Activated B cell treated with CpG ODN at 0.5 μM for 24 hours (primary cell): ENCODE measurements at regions of chr14 and their contacts with region 1.

Region 1: DNA sequence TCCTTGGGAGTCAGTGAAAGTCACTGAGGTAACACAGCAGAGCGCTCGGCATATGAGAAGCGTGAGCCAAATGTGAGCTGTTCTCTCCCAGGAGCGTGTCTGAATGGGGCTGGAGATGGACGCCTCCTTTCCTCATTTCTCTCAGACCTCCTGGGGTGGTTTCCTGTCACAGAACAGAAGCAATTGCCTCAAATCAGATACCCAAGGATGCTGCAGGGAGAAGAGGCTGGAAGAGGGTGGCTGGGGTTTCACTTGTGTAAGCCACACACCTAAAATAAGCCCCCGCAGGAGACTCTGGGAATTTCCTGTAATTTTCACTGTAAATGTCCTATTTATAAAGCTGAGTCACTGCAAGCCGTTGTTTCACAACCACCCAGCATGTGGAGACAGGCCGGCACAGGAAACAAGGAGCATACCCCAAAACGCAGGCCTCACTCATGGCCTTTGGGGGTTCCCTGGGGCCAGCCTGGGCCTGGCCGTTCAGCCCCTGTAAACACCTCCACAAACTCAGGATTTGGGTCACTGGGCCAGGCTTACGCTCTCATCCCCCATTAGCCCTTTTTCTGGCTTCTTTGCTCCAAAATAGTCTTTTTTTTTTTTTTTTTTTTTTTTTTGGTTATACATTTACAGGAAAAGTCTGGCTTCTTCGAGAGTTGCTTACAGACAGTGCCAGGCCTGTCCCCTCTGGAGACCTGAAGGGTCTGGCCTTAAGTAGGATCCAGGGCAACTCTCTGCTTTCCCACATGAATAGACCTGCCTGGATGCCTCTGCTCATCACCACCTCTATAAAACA is 55.3 kb downstream of the VCPKMT start:
- DNase-seq: no peak
- ATAC-seq: peak; percentile 0
- H3K4me3 Mint-ChIP-seq: peak overlapping the region; percentile 87
- H3K27ac Mint-ChIP-seq: peak overlapping the region; percentile 100
- H3K4me1 Mint-ChIP-seq: peaks cover 88% of the 10 kb centered on the region
- H3K27me3 Mint-ChIP-seq: no peaks in the 10 kb centered on the region
- CTCF ChIP-seq: no peak

Region 2: GRCh38 chr14:49959822-49960408 is 101.2 kb before region 1 on chr14:
- CTCF ChIA-PET with region 1: interaction called, 10 read pairs
- POLR2A ChIA-PET with region 1: interaction called, 13 read pairs
- intact Hi-C with region 1: no loop called
- DNase-seq: no peak
- ATAC-seq: peak; percentile 59
- H3K4me3 Mint-ChIP-seq: peak overlapping the region; percentile 71
- H3K27ac Mint-ChIP-seq: peak overlapping the region; percentile 96
- H3K4me1 Mint-ChIP-seq: peaks cover 67% of the 10 kb centered on the region
- H3K27me3 Mint-ChIP-seq: no peaks in the 10 kb centered on the region
- CTCF ChIP-seq: no peak

Region 3: GRCh38 chr14:50038398-50039119 is 22.5 kb before region 1 on chr14:
- CTCF ChIA-PET with region 1: interaction called, 7 read pairs
- POLR2A ChIA-PET with region 1: interaction called, 96 read pairs
- intact Hi-C with region 1: loop called (anchors 1 kb)
- DNase-seq: no peak
- ATAC-seq: peak; percentile 78
- H3K4me3 Mint-ChIP-seq: peak overlapping the region; percentile 52
- H3K27ac Mint-ChIP-seq: peak overlapping the region; percentile 93
- H3K4me1 Mint-ChIP-seq: peaks cover 45% of the 10 kb centered on the region
- H3K27me3 Mint-ChIP-seq: no peaks in the 10 kb centered on the region
- CTCF ChIP-seq: no peak

Region 4: DNA sequence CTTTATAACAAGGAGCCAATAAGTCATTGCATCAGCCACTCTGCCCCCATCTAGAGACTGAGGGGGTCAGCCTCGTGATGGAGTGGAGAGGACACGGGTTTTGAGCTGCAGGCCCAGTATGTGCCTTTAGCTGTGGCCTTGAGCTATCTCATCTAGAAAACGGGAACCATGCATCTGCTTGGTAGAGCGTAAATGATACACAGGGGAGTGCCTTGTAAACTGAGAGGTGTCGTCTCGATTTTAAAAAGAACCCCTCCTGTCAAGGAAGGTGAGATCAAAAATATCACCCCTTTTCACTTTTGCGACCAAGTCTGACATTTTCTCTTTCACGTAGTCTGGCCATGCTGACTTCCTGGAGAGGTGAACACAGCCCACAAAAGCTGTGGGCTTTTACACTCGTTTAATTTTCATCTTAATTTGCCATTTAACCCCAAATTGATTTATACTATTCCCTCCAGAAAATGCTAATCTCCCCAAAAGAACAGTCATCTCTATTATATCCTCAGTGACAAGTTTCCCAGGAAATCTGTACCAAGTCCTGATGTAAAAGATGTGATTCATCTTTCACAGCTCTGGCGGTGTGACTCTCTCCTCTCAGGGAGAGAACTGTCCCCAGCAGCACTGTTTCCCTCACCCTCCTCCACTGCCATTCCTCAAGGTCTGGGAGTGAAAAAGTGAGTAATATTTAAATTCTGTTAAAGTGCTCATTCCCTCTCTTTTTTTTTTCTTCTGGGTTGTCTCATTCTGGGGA is 24.7 kb after region 1 on chr14:
- CTCF ChIA-PET with region 1: interaction called, 30 read pairs
- POLR2A ChIA-PET with region 1: interaction called, 397 read pairs
- intact Hi-C with region 1: loop called (anchors 1 kb)
- DNase-seq: peak; percentile 44
- ATAC-seq: peak; percentile 75
- H3K4me3 Mint-ChIP-seq: peak overlapping the region; percentile 68
- H3K27ac Mint-ChIP-seq: peak overlapping the region; percentile 97
- H3K4me1 Mint-ChIP-seq: peaks cover 92% of the 10 kb centered on the region
- H3K27me3 Mint-ChIP-seq: no peaks in the 10 kb centered on the region
- CTCF ChIP-seq: no peak

Region 5: GRCh38 chr14:50109342-50109741 is 48.3 kb after region 1 on chr14:
- CTCF ChIA-PET with region 1: interaction called, 32 read pairs
- POLR2A ChIA-PET with region 1: interaction called, 84 read pairs
- intact Hi-C with region 1: loop called (anchors 1 kb)
- DNase-seq: no peak
- ATAC-seq: no peak
- H3K4me3 Mint-ChIP-seq: no peak overlapping the region
- H3K27ac Mint-ChIP-seq: peak overlapping the region; percentile 20
- H3K4me1 Mint-ChIP-seq: peaks cover 46% of the 10 kb centered on the region
- H3K27me3 Mint-ChIP-seq: no peaks in the 10 kb centered on the region
- CTCF ChIP-seq: no peak